ENCODE measurements at regions of chr2 and their contacts with region 1.

Region 1: GRCh38 chr2:121974897-121975661 is 219.6 kb downstream of the TSN start:
- DNase-seq: peak; percentile 76 to 84
- H3K4me3 ChIP-seq: no peak overlapping the region
- H3K4me1 ChIP-seq: no peaks in the 10 kb centered on the region
- H3K27me3 ChIP-seq: peaks cover under 1% of the 10 kb centered on the region; the same call in 1 of the 2 replicates

Region 2: DNA sequence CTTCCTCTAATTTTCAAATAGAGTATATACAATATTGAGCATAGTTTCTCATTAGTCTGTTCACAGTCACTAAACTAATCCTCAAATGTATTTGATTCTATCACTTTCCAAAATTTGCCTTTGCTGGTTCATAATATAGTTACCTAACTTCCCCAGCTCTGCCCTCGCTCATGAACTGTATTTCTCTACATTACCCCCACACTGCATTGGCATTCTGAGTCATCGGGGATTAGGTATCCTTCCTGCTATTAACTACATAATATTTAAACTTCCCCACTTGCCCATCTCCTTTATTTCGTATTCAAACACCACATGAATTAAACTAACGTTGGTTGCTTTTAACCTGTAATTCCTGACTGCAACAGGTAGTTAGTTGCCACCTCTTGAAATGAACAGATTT is 311.0 kb before region 1 on chr2:
- in situ Hi-C with region 1: no loop called
- DNase-seq: no peak
- H3K4me3 ChIP-seq: no peak overlapping the region
- H3K4me1 ChIP-seq: peaks cover 10% of the 10 kb centered on the region; the same call in 1 of the 2 replicates
- H3K27me3 ChIP-seq: no peaks in the 10 kb centered on the region

Region 3: GRCh38 chr2:121777699-121778058 is 197.4 kb before region 1 on chr2:
- in situ Hi-C with region 1: no loop called
- DNase-seq: no peak
- H3K4me3 ChIP-seq: no peak overlapping the region
- H3K4me1 ChIP-seq: no peaks in the 10 kb centered on the region; the same call in 1 of the 2 replicates
- H3K27me3 ChIP-seq: peaks cover 4% of the 10 kb centered on the region; the same call in 1 of the 2 replicates

Region 4: GRCh38 chr2:122451040-122451439 is 476.0 kb after region 1 on chr2:
- in situ Hi-C with region 1: loop called (anchors 10 kb)
- DNase-seq: peak; percentile 9 to 41
- H3K4me3 ChIP-seq: no peak overlapping the region
- H3K4me1 ChIP-seq: no peaks in the 10 kb centered on the region
- H3K27me3 ChIP-seq: no peaks in the 10 kb centered on the region

Measured in HAP-1 (cell line).